Endothelial cell of umbilical vein (primary cell): ENCODE measurements at regions of chr2 and their contacts with region 1.

Region 1: GRCh38 chr2:111936881-111937280 is 38.5 kb downstream of the MERTK start:
- DNase-seq: peak; percentile 41
- H3K4me3 ChIP-seq: no peak overlapping the region
- H3K27ac ChIP-seq: peak overlapping the region; percentile 76
- H3K4me1 ChIP-seq: peaks cover 30% of the 10 kb centered on the region
- H3K27me3 ChIP-seq: no peaks in the 10 kb centered on the region
- CTCF ChIP-seq: no peak
- POLR2A ChIP-seq: no peak

Region 2: DNA sequence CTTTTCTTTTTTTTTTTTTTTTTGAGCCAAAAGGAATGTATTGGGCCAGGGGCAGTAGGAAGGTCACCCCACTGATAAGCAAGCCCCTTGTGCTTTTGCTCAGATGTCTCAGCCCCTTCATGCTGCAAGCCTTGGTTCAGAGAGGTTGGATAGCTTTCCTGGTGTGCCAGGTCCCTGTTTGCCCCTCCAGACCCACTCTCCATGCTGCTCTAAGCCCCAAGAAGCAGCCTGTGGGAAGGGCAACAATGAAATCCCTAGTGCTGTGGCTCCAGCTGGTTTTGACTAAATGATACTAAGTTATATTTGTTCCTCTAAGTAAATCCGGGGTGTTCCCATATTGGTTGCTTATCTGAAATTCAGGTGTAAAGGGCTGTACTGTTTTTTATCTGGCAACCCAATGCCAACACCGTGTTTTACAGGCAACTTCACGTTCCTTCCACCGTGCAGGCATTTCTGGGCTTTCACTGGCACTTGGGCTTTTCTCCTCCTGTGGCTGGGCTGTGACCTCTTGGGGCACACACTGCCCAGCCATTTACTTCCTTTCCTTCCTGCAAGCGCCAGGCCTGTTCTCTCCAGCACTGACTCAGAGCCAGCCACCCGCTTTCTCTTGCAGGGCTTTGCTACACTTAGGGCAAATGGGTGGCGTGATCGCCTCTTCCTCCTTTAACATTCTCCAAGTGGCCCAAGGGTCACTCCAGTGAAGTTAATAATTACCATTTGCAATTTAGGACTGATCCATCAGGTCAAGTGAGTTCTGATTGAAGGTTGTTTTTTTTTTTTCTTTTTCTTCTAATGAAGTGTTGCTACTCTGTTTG is 16.9 kb before region 1 on chr2:
- CTCF ChIA-PET with region 1: interaction called, 11 read pairs
- POLR2A ChIA-PET with region 1: interaction called, 4 read pairs
- dilution Hi-C with region 1: no loop called
- intact Hi-C with region 1: loop called (anchors 1 kb)
- DNase-seq: peak; percentile 89
- H3K4me3 ChIP-seq: no peak overlapping the region
- H3K27ac ChIP-seq: peak overlapping the region; percentile 85
- H3K4me1 ChIP-seq: peaks cover 31% of the 10 kb centered on the region
- H3K27me3 ChIP-seq: no peaks in the 10 kb centered on the region
- CTCF ChIP-seq: peak in 1 of 2 donors; percentile 3
- POLR2A ChIP-seq: peak; percentile 41

Region 3: GRCh38 chr2:111967018-111967417 is 30.1 kb after region 1 on chr2:
- CTCF ChIA-PET with region 1: interaction called, 3 read pairs
- POLR2A ChIA-PET with region 1: no interaction called
- dilution Hi-C with region 1: no loop called
- intact Hi-C with region 1: loop called (anchors 1 kb)
- DNase-seq: peak; percentile 20
- H3K4me3 ChIP-seq: no peak overlapping the region
- H3K27ac ChIP-seq: peak overlapping the region; percentile 82
- H3K4me1 ChIP-seq: peaks cover 32% of the 10 kb centered on the region
- H3K27me3 ChIP-seq: no peaks in the 10 kb centered on the region
- CTCF ChIP-seq: no peak
- POLR2A ChIP-seq: no peak

Region 4: GRCh38 chr2:112048887-112049286 is 112.0 kb after region 1 on chr2:
- CTCF ChIA-PET with region 1: no interaction called
- POLR2A ChIA-PET with region 1: no interaction called
- dilution Hi-C with region 1: no loop called
- intact Hi-C with region 1: no loop called
- DNase-seq: peak; percentile 84
- H3K4me3 ChIP-seq: no peak overlapping the region
- H3K27ac ChIP-seq: no peak overlapping the region
- H3K4me1 ChIP-seq: peaks cover 5% of the 10 kb centered on the region
- H3K27me3 ChIP-seq: peaks cover 0 to 1% of the 10 kb centered on the region in 2 experiments
- CTCF ChIP-seq: peak; percentile 48 to 69
- POLR2A ChIP-seq: no peak

Region 5: DNA sequence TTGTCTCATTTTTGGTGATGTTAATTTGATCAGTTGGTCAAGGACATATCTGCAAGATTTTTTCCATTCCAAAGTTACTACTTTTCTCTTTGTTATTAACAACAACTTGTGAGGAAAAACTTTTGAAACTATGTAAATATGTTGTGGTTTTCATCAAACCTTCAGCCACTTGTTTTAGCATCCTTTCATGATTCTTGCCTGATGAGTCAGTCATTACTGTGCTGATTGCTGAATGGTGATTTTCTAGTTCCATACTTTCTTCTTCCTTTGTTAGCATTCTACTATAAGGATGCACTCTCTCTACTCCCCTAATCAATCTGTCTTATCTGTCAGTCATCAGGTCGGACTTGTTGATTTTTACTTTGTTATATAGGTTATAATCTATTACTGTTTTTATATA is 129.1 kb after region 1 on chr2:
- CTCF ChIA-PET with region 1: no interaction called
- POLR2A ChIA-PET with region 1: no interaction called
- dilution Hi-C with region 1: no loop called
- intact Hi-C with region 1: no loop called
- DNase-seq: peak; percentile 35
- H3K4me3 ChIP-seq: no peak overlapping the region
- H3K27ac ChIP-seq: peak overlapping the region; percentile 4
- H3K4me1 ChIP-seq: peaks cover 36% of the 10 kb centered on the region
- H3K27me3 ChIP-seq: no peaks in the 10 kb centered on the region
- CTCF ChIP-seq: no peak
- POLR2A ChIP-seq: no peak